ENCODE measurements at regions of chr1 and their contacts with region 1.

Region 1: GRCh38 chr1:14390816-14391215 is 207.7 kb upstream of the KAZN start:
- DNase-seq: no peak
- ATAC-seq: no peak
- H3K4me3 ChIP-seq: no peak overlapping the region
- H3K27ac ChIP-seq: no peak overlapping the region
- H3K4me1 ChIP-seq: no peaks in the 10 kb centered on the region
- H3K27me3 ChIP-seq: peaks cover 0 to 13% (median 0%) of the 10 kb centered on the region in 9 donors
- CTCF ChIP-seq: no peak
- POLR2A ChIP-seq: no peak

Region 2: GRCh38 chr1:14334336-14335176 is 56.3 kb before region 1 on chr1:
- intact Hi-C with region 1: loop called in 1 of 10 experiments (anchors 10 kb)
- DNase-seq: no peak
- ATAC-seq: no peak
- H3K4me3 ChIP-seq: no peak overlapping the region
- H3K27ac ChIP-seq: no peak overlapping the region
- H3K4me1 ChIP-seq: no peaks in the 10 kb centered on the region
- H3K27me3 ChIP-seq: no peaks in the 10 kb centered on the region
- CTCF ChIP-seq: no peak
- POLR2A ChIP-seq: no peak

Region 3: DNA sequence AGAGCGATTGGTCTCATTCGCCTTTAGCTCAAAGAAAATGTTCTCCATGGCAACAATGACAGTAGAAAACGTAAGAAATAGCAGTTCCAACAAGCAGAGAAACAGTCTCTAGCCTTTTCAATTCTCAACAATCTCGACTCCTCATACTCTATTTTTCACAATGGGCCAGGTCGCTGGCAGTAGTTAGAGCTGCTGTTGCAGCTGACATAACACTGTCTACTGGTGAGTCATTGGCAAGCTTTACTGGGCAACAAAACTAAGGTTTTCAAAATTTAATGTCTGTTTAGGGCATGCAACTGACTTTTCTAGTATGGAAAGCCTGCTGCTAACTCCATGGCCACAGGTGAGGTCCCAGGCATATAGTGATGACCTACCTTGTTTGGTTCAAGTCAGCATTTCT is 13.4 kb before region 1 on chr1:
- intact Hi-C with region 1: no loop called
- DNase-seq: no peak
- ATAC-seq: no peak
- H3K4me3 ChIP-seq: no peak overlapping the region
- H3K27ac ChIP-seq: no peak overlapping the region
- H3K4me1 ChIP-seq: no peaks in the 10 kb centered on the region
- H3K27me3 ChIP-seq: no peaks in the 10 kb centered on the region
- CTCF ChIP-seq: no peak
- POLR2A ChIP-seq: no peak

Region 4: DNA sequence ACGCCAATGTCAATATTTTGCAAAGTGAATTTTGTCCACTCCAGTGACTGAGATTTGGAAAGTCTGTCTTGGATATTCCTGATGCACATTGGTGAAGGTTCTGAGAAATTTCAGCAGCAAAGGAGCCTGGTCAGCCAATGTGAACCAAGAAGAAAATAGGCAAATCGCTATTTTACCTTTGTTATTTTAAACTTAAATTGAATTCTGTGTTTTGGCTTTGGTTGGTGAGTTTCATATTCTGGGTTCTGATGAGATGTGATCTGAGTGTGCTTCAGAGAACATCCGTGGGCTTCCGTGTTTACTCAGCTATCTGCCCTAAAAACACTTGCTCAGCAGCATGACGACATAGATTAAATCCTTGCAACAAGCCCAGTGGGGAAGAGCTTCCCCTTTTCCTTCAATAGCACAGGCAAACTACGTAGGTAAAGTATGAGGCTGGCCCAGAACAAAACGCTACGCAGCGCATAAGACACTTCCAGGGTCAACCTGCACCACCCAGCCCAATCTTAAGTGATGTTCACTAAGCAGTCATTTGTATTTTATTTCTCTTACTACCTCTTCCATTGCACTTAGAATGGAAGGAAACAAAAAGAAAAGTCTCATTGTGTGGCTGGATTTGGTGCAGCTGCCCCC is 31.3 kb after region 1 on chr1:
- intact Hi-C with region 1: no loop called
- DNase-seq: no peak
- ATAC-seq: no peak
- H3K4me3 ChIP-seq: no peak overlapping the region
- H3K27ac ChIP-seq: no peak overlapping the region
- H3K4me1 ChIP-seq: no peaks in the 10 kb centered on the region
- H3K27me3 ChIP-seq: peaks cover 0 to 8% (median 0%) of the 10 kb centered on the region in 9 donors
- CTCF ChIP-seq: no peak
- POLR2A ChIP-seq: no peak

Measured in heart left ventricle (tissue), 16 donors.